Prostate gland (tissue), 2 donors: ENCODE measurements at regions of chr19 and their contacts with region 1.

Region 1: DNA sequence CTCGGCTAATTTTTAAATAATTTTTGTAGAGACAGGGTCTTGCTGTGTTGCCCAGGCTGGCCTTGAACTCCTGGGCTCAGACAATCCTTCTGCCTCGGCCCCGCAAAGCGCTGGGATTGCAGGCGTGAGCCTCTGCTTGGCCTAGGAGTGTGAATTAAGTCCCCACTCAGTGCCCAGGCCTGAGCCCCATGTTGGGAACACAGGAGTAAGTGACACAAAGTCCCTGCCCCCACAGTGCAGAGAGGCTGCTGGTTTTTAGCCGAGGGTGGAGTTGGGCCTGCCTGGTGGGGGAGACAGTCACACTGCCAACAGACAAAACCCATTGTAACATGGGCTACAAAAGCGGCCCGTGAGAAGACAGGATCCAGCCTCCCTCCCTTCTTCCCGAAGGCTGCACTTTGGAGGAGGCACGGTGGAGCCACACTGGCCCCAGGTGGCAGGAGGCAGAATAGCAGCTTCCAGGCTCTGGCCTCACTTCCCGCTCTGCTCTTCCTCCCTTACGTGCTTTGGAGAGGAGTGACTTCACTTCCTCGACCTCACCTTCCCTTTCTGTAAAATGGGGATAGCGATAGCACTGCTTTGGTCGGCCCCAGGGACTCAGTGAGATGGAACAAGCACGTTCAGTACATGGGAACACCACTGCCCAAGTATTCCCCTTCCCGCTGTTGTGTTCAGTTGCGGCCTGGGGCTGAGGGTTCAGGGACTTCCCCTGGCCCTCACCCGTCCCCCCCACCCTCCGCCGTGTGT is 15.2 kb upstream of the EHD2 start:
- DNase-seq: peak; percentile 73
- H3K4me3 ChIP-seq: no peak overlapping the region
- H3K27ac ChIP-seq: peak overlapping the region; percentile 61 to 71
- H3K4me1 ChIP-seq: no peaks in the 10 kb centered on the region
- H3K27me3 ChIP-seq: no peaks in the 10 kb centered on the region
- CTCF ChIP-seq: peak; percentile 87 to 99 (median 94)
- POLR2A ChIP-seq: no peak

Region 2: GRCh38 chr19:47436712-47437401 is 261.2 kb before region 1 on chr19:
- intact Hi-C with region 1: loop called (anchors 2 kb)
- DNase-seq: peak; percentile 77
- H3K4me3 ChIP-seq: no peak overlapping the region
- H3K27ac ChIP-seq: no peak overlapping the region
- H3K4me1 ChIP-seq: no peaks in the 10 kb centered on the region
- H3K27me3 ChIP-seq: no peaks in the 10 kb centered on the region
- CTCF ChIP-seq: peak; percentile 80 to 97 (median 92)
- POLR2A ChIP-seq: no peak

Region 3: DNA sequence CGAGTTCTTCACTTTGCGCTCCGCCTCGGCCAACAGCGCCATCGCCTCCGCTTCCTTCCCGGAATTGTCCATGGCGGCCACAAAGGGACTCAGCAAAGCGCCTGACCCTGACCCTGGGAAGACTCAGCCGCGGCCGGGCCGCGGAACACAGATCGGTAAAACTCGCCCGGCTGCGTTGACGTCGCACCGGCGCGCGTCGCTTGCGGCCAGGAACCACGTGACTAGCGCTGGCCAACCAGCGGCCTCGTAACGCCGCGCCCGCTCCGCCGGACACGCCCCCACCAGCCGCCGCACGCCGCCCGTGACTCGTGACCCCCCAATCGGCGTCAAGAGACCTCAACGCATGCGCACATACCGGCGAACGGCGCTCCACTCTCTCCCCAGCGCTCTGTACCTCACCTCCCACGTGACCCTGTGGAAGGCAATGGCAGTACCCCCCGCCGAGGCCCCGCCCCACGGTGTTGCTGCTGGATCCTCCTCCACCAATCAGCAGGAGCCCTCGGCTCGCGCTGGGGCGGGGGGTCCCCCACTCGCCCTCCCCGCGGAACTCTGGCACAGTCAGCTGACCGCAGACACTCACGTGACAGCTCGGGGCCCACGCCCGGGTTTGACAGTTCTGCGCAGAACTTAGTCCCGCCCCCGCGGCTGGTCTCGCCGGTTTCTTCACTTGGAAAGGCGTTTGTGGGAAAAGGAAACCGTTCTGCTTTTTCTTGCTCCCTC is 183.0 kb before region 1 on chr19 and contains the start of gene NAPA:
- intact Hi-C with region 1: loop called (anchors 5 kb)
- DNase-seq: peak; percentile 100
- H3K4me3 ChIP-seq: peak within 1 kb of the TSS; percentile 78 to 97
- H3K27ac ChIP-seq: peak within 1 kb of the TSS; percentile 97 to 98
- H3K4me1 ChIP-seq: peaks cover 23% of the 10 kb centered on the region
- H3K27me3 ChIP-seq: no peaks in the 10 kb centered on the region
- CTCF ChIP-seq: peak in 1 of 4 experiments; percentile 20
- POLR2A ChIP-seq: peak; percentile 98
- total RNA-seq, gene NAPA: 263 to 422 TPM

Region 4: GRCh38 chr19:47540728-47541127 is 157.3 kb before region 1 on chr19:
- intact Hi-C with region 1: loop called (anchors 5 kb)
- DNase-seq: no peak
- H3K4me3 ChIP-seq: no peak overlapping the region
- H3K27ac ChIP-seq: no peak overlapping the region
- H3K4me1 ChIP-seq: no peaks in the 10 kb centered on the region
- H3K27me3 ChIP-seq: peaks cover 8% of the 10 kb centered on the region
- CTCF ChIP-seq: peak in 1 of 4 experiments; percentile 7
- POLR2A ChIP-seq: no peak

Region 5: GRCh38 chr19:47608074-47608918 is 89.7 kb before region 1 on chr19:
- intact Hi-C with region 1: loop called (anchors 5 kb)
- DNase-seq: peak; percentile 92
- H3K4me3 ChIP-seq: peak overlapping the region; percentile 78 to 93
- H3K27ac ChIP-seq: peak overlapping the region; percentile 96 to 97
- H3K4me1 ChIP-seq: peaks cover 5% of the 10 kb centered on the region
- H3K27me3 ChIP-seq: no peaks in the 10 kb centered on the region
- CTCF ChIP-seq: peak in 2 of 4 experiments; percentile 48 to 51
- POLR2A ChIP-seq: peak; percentile 97

Region 6: GRCh38 chr19:47663841-47664771 is 33.9 kb before region 1 on chr19:
- intact Hi-C with region 1: loop called (anchors 2 kb)
- DNase-seq: peak; percentile 79
- H3K4me3 ChIP-seq: peak overlapping the region in 1 of 2 donors; percentile 5
- H3K27ac ChIP-seq: peak overlapping the region; percentile 94 to 95
- H3K4me1 ChIP-seq: peaks cover 24% of the 10 kb centered on the region
- H3K27me3 ChIP-seq: no peaks in the 10 kb centered on the region
- CTCF ChIP-seq: no peak
- POLR2A ChIP-seq: peak; percentile 26

Region 7: DNA sequence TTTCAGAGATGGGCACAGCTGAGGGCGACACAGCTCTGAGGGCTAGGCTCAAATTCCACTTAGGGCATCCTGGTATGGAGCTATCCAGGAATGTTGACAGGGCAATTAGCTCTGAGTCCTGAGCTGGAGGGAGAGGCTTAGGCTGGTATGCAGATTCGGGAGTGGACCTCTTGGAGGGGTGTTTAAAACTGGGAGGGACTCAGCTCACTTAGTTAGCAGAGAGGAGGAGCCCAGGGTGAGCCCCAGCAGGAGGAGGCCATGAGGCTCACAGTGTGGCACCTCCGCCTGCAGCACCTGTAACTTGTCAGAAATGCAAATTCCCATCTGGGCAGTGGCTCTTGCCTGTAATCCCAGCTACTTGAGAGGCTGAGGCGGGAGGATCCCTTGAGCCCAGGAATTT is 37.1 kb after region 1 on chr19:
- intact Hi-C with region 1: no loop called
- DNase-seq: no peak
- H3K4me3 ChIP-seq: no peak overlapping the region
- H3K27ac ChIP-seq: no peak overlapping the region
- H3K4me1 ChIP-seq: no peaks in the 10 kb centered on the region
- H3K27me3 ChIP-seq: no peaks in the 10 kb centered on the region
- CTCF ChIP-seq: no peak
- POLR2A ChIP-seq: no peak